Mammary epithelial cell (primary cell): ENCODE measurements at regions of chr12 and their contacts with region 1.

Region 1: GRCh38 chr12:124774462-124775167 is 89.0 kb downstream of the SCARB1 start:
- DNase-seq: peak; percentile 87
- H3K4me3 ChIP-seq: no peak overlapping the region
- H3K27ac ChIP-seq: no peak overlapping the region
- H3K4me1 ChIP-seq: peaks cover 19% of the 10 kb centered on the region
- H3K27me3 ChIP-seq: no peaks in the 10 kb centered on the region
- CTCF ChIP-seq: peak in 1 of 2 donors; percentile 12

Region 2: GRCh38 chr12:124898200-124898922 is 123.7 kb after region 1 on chr12:
- CTCF ChIA-PET with region 1: no interaction called
- dilution Hi-C with region 1: no loop called
- in situ Hi-C with region 1: no loop called
- intact Hi-C with region 1: loop called (anchors 5 kb)
- DNase-seq: peak; percentile 45
- H3K4me3 ChIP-seq: no peak overlapping the region
- H3K27ac ChIP-seq: no peak overlapping the region
- H3K4me1 ChIP-seq: peaks cover 5% of the 10 kb centered on the region
- H3K27me3 ChIP-seq: no peaks in the 10 kb centered on the region
- CTCF ChIP-seq: peak; percentile 51 to 61